ENCODE measurements at regions of chr5 and their contacts with region 1.

Region 1: GRCh38 chr5:123371575-123372179 is 51.5 kb downstream of the CEP120 start:
- DNase-seq: peak; percentile 63
- H3K4me3 ChIP-seq: no peak overlapping the region
- H3K27ac ChIP-seq: no peak overlapping the region
- H3K4me1 ChIP-seq: peaks cover 5% of the 10 kb centered on the region
- H3K27me3 ChIP-seq: no peaks in the 10 kb centered on the region
- CTCF ChIP-seq: peak; percentile 82

Region 2: DNA sequence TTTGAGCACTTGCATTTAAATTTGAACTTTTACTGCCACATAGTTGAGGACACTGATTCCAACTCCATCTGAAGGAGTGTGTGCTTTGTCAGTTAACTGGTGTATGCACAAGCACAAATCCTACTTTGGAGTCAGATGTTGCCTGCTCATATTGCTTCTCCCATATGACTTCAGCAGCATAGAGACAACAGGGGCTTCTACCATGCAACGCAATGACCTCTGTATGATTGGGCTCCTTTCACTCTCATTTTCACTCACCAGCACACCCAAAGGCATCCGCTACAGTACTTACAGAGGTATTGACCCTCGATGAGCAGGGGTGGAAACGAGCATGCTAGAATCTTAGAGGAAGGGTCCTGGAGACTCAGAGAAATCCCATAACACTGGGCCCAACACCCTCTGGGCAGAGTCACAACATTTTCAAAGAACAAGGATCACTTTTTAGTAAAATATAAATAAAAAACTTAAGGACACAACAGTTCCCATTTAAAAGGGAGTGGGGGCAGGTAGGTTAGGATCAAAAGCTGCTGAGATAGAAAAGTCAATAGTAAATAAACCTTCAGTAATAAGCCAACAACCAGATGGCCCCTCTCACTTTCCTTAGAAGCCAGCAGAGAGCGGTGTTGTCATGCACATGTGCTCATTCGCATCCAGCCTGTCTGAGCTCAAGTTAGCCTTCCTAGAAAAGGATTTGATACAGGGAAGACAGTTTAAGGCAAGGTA is 855.8 kb before region 1 on chr5:
- CTCF ChIA-PET with region 1: interaction called, 7 read pairs
- POLR2A ChIA-PET with region 1: no interaction called
- intact Hi-C with region 1: loop called (anchors 1 kb)
- DNase-seq: peak; percentile 65
- H3K4me3 ChIP-seq: no peak overlapping the region
- H3K27ac ChIP-seq: no peak overlapping the region
- H3K4me1 ChIP-seq: no peaks in the 10 kb centered on the region
- H3K27me3 ChIP-seq: peaks cover 12% of the 10 kb centered on the region
- CTCF ChIP-seq: peak; percentile 73

Region 3: GRCh38 chr5:122704243-122705036 is 667.2 kb before region 1 on chr5:
- CTCF ChIA-PET with region 1: no interaction called
- POLR2A ChIA-PET with region 1: no interaction called
- intact Hi-C with region 1: loop called (anchors 10 kb)
- DNase-seq: peak; percentile 70
- H3K4me3 ChIP-seq: no peak overlapping the region
- H3K27ac ChIP-seq: no peak overlapping the region
- H3K4me1 ChIP-seq: peaks cover 3% of the 10 kb centered on the region
- H3K27me3 ChIP-seq: no peaks in the 10 kb centered on the region
- CTCF ChIP-seq: peak; percentile 68

Region 4: DNA sequence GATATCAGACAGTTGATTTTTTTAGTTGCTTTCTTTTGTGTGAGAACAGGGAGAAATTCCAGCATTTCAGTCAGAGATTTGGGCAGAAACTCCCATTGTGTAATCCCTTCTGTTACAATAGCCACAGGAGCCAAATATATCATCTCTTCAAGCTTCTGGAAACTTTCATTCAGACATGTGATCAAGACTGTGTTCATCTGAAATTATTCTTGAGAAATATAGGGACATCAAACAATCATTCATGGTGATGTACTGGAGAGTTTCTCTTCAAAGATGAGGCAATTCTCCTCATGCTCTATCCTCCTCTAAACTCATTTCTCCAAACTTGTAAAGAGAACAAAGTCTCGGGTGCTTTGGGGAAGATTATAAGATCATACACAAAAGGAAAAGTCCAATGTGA is 105.1 kb after region 1 on chr5:
- CTCF ChIA-PET with region 1: no interaction called
- POLR2A ChIA-PET with region 1: no interaction called
- intact Hi-C with region 1: no loop called
- DNase-seq: no peak
- H3K4me3 ChIP-seq: no peak overlapping the region
- H3K27ac ChIP-seq: no peak overlapping the region
- H3K4me1 ChIP-seq: no peaks in the 10 kb centered on the region
- H3K27me3 ChIP-seq: no peaks in the 10 kb centered on the region
- CTCF ChIP-seq: no peak

Region 5: GRCh38 chr5:123545506-123545905 is 173.8 kb after region 1 on chr5:
- CTCF ChIA-PET with region 1: no interaction called
- POLR2A ChIA-PET with region 1: no interaction called
- intact Hi-C with region 1: loop called (anchors 5 kb)
- DNase-seq: peak; percentile 61
- H3K4me3 ChIP-seq: no peak overlapping the region
- H3K27ac ChIP-seq: no peak overlapping the region
- H3K4me1 ChIP-seq: no peaks in the 10 kb centered on the region
- H3K27me3 ChIP-seq: no peaks in the 10 kb centered on the region
- CTCF ChIP-seq: peak; percentile 78